A673 (cell line): ENCODE measurements at regions of chr20 and their contacts with region 1.

Region 1: GRCh38 chr20:14597206-14597715 is 259.8 kb upstream of the FLRT3 start:
- DNase-seq: no peak
- H3K4me3 ChIP-seq: no peak overlapping the region
- H3K27ac ChIP-seq: no peak overlapping the region
- H3K4me1 ChIP-seq: no peaks in the 10 kb centered on the region
- H3K27me3 ChIP-seq: no peaks in the 10 kb centered on the region
- CTCF ChIP-seq: no peak

Region 2: GRCh38 chr20:14712302-14712739 is 115.1 kb after region 1 on chr20:
- CTCF ChIA-PET with region 1: no interaction called
- POLR2A ChIA-PET with region 1: no interaction called
- intact Hi-C with region 1: loop called (anchors 10 kb)
- DNase-seq: no peak
- H3K4me3 ChIP-seq: no peak overlapping the region
- H3K27ac ChIP-seq: no peak overlapping the region
- H3K4me1 ChIP-seq: no peaks in the 10 kb centered on the region
- H3K27me3 ChIP-seq: no peaks in the 10 kb centered on the region
- CTCF ChIP-seq: no peak